GM10248 (cell line): ENCODE measurements at regions of chr1 and their contacts with region 1.

Region 1: GRCh38 chr1:23184212-23184934 is 15.7 kb upstream of the LUZP1 start:
- DNase-seq: peak; percentile 57
- CTCF ChIP-seq: peak; percentile 63

Region 2: GRCh38 chr1:23081376-23081775 is 103.0 kb before region 1 on chr1:
- CTCF ChIA-PET with region 1: interaction called, 641 read pairs
- POLR2A ChIA-PET with region 1: no interaction called
- DNase-seq: no peak
- CTCF ChIP-seq: no peak

Region 3: GRCh38 chr1:23114424-23115079 is 69.8 kb before region 1 on chr1:
- CTCF ChIA-PET with region 1: interaction called, 83 read pairs
- POLR2A ChIA-PET with region 1: interaction called, 3 read pairs
- DNase-seq: no peak
- CTCF ChIP-seq: no peak

Region 4: GRCh38 chr1:23129846-23130245 is 54.5 kb before region 1 on chr1:
- CTCF ChIA-PET with region 1: interaction called, 13 read pairs
- POLR2A ChIA-PET with region 1: no interaction called
- DNase-seq: no peak
- CTCF ChIP-seq: no peak

Region 5: DNA sequence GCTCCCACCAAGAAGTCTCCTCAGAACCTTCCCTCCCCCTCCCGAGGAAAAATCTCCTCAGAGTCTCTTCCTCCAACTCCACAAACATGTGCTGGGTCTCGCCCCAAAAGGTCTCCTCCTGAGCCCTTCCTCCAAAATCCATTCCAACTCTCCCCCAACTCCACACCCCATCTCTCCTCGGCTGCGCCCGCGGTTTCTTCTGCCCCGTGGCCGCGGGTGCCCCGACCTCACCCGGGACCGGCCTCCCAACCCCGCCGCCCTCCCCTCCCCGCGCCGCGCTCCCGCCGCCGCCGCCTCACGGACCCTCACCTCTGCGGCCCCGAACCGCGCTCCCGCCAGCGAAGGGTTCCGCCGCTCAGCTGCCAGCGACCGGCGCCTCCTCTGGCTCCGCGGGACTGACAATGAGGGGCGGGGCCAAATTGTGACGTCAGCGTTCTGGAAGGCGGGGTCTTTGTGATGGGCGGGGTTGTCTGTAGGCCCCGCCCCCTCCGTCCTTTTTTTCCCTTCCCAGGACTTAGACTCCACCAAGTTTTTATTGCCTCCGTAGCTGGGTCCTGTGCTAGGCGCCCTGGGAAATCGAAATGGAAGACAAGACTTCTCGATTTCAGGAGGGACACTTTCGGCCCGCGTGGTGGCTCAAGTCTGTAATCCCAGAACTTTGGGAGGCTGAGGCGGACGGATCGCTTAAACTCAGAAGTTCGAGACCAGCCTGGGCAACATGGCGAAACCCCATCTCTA is 15.7 kb before region 1 on chr1 and contains the start of gene LUZP1:
- CTCF ChIA-PET with region 1: interaction called, 123 read pairs
- POLR2A ChIA-PET with region 1: interaction called, 10 read pairs
- DNase-seq: peak; percentile 93
- CTCF ChIP-seq: no peak

Region 6: DNA sequence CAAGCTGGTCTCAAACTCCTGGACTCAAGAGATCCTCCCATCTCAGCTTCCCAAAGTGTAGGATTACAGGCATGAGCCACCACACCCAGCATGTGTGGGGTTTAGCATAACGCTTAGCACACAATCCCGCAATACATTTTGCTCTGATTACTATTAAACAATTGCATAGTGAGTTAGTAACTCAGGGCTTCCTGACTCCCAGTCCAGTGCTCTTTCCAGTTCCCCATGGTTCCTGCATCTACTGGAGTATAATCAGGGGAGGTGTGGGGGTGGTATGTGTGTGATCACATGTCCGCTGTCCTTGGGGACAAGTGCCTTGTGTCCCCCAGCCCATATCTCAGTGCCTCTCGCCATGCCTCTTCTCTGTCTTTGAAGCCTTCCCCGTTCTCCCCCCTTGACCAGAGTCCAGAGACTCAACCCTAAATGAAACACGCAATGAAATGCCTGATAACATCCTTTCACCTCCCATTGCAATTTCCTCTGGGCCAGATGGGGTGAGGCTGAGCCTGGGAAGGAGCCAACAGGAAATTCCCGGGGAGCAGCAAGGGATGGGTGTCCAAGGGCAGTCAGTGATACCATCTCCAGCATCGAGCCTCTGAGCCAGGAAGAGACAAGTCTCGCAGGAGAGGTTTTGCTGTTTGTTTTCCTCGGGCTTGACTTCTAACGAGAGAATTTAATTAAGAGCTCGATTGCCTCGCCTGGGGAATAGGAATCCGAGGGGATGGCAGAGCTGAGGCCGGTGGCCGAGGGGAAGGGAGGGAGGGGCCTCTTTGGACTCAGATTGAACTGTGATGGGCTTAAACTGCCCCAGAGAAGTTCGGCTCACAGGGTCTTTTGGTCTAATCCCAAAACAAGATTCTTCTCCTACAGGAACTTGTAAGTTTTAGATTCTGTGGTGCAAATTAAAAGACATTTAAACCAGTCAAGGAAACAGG is 40.6 kb after region 1 on chr1:
- CTCF ChIA-PET with region 1: no interaction called
- POLR2A ChIA-PET with region 1: no interaction called
- DNase-seq: no peak
- CTCF ChIP-seq: no peak